ENCODE measurements at regions of chr12 and their contacts with region 1.

Region 1: GRCh38 chr12:89542912-89543592 is 17.2 kb upstream of the POC1B start:
- DNase-seq: peak; percentile 68 to 89
- ATAC-seq: peak; percentile 85 to 91
- H3K4me3 ChIP-seq: no peak overlapping the region
- H3K27ac ChIP-seq: peak overlapping the region; percentile 40 to 66; a peak in 5 of 6 replicates
- H3K4me1 ChIP-seq: peaks cover 27% of the 10 kb centered on the region
- CTCF ChIP-seq: peak; percentile 90
- EP300 ChIP-seq: no peak
- POLR2A ChIP-seq: no peak
- RAD21 ChIP-seq: peak; percentile 97 to 99

Region 2: GRCh38 chr12:89529738-89530137 is 13.3 kb before region 1 on chr12:
- CTCF ChIA-PET with region 1: interaction called, 14 read pairs
- POLR2A ChIA-PET with region 1: no interaction called
- DNase-seq: peak; percentile 66 to 67
- ATAC-seq: no peak
- H3K4me3 ChIP-seq: no peak overlapping the region
- H3K27ac ChIP-seq: peak overlapping the region in 1 of 2 experiments; percentile 31; a peak in 1 of 6 replicates
- H3K4me1 ChIP-seq: peaks cover 10% of the 10 kb centered on the region; the same call in 2 of the 3 replicates
- CTCF ChIP-seq: peak; percentile 84
- EP300 ChIP-seq: no peak
- POLR2A ChIP-seq: no peak
- RAD21 ChIP-seq: peak; percentile 89 to 92

Region 3: DNA sequence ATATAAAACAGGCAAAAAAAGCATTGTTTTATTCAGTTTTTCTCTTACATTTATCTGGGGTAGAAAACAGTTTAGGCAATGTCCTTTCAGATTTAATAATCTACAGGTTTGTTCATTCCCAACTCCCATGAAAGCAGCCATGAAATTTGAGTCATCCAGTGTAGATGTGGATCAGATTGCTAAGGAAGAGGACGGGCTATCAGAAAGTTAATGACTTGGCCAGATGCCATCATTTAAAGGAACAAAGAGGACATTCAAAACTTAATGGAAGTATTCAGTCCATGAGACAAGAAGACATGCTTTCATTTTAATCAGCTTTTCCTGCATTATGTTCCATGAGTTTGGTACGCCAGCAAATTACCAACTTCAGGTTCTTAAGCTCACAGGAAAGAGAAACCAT is 13.9 kb after region 1 on chr12:
- CTCF ChIA-PET with region 1: interaction called, 14 read pairs
- POLR2A ChIA-PET with region 1: no interaction called
- DNase-seq: no peak
- ATAC-seq: no peak
- H3K4me3 ChIP-seq: no peak overlapping the region
- H3K27ac ChIP-seq: no peak overlapping the region
- H3K4me1 ChIP-seq: no peaks in the 10 kb centered on the region
- CTCF ChIP-seq: no peak
- EP300 ChIP-seq: no peak
- POLR2A ChIP-seq: no peak
- RAD21 ChIP-seq: no peak

Region 4: GRCh38 chr12:89648211-89648930 is 105.3 kb after region 1 on chr12:
- CTCF ChIA-PET with region 1: no interaction called
- POLR2A ChIA-PET with region 1: no interaction called
- DNase-seq: no peak
- ATAC-seq: peak; percentile 50 to 58; a peak in 5 of 6 replicates
- H3K4me3 ChIP-seq: no peak overlapping the region
- H3K27ac ChIP-seq: no peak overlapping the region
- H3K4me1 ChIP-seq: peaks cover 22% of the 10 kb centered on the region
- CTCF ChIP-seq: no peak
- EP300 ChIP-seq: no peak
- POLR2A ChIP-seq: no peak
- RAD21 ChIP-seq: no peak

Region 5: DNA sequence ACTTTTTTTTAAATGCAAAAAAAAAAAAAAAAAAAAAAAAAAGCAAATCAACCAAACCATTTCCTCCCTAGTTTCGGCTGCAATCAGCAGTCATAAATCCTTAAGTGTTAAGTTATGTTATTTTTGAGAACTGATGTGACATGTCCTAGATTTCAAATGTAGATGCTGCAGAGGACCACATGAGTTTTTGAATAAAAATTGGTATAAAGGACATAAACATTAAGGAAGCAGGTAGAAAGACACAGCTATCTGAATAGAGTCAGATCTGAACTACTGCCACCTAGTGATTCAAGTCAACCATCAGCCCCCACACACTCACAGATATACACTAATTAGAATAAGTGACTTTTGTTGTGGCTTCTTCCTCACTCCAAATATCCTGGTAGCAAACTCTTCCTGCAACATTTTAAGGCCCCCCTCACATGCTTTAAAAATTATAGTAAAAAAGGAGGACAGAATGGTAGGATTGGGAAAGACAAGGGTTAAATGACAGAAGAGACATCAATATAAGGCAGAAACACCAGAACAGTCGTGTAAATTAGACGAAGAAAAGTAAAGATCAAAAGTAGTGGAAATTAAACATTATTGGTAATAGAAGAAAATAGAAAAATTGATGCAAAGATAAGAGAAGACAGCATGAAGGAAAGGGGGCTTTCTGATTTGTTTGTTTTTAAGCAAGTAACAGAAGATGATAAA is 560.1 kb after region 1 on chr12:
- CTCF ChIA-PET with region 1: interaction called, 12 read pairs
- POLR2A ChIA-PET with region 1: no interaction called
- DNase-seq: peak; percentile 18 to 61
- ATAC-seq: peak; percentile 72 to 84; a peak in 4 of 6 replicates
- H3K4me3 ChIP-seq: no peak overlapping the region
- H3K27ac ChIP-seq: no peak overlapping the region
- H3K4me1 ChIP-seq: peaks cover 42% of the 10 kb centered on the region
- CTCF ChIP-seq: peak; percentile 57
- EP300 ChIP-seq: no peak
- POLR2A ChIP-seq: no peak
- RAD21 ChIP-seq: peak; percentile 51 to 66

Region 6: DNA sequence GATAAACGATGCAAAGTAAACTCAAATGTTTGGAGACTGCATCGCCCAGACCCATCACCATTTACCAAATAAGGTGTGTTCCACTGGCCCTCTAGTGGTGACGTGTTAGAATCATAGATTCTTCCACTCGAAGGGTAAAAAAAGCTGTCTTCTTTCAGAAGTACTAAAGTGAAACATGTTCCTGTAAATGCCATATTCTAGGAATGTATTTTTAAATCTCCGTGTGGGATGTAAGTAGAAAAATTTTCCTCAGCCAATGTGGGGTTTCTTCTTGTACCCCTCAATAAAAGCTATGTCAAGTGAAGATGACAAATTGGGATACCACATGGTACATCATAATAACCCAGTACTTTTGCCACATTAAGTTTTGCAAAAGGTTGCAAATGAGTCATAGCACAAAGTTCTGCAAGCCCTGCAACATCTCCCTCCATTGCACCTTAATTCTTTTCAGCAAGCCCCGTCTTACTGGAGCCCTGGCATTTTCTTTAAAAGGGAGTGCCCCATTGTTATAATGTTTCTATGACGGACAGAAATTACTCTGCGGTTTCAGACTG is 1311.2 kb after region 1 on chr12:
- CTCF ChIA-PET with region 1: interaction called, 17 read pairs
- POLR2A ChIA-PET with region 1: no interaction called
- DNase-seq: peak; percentile 31 to 60
- ATAC-seq: peak; percentile 77 to 87; a peak in 5 of 6 replicates
- H3K4me3 ChIP-seq: no peak overlapping the region
- H3K27ac ChIP-seq: no peak overlapping the region
- H3K4me1 ChIP-seq: peaks cover 5% of the 10 kb centered on the region; the same call in 1 of the 3 replicates
- CTCF ChIP-seq: peak; percentile 70
- EP300 ChIP-seq: no peak
- POLR2A ChIP-seq: no peak
- RAD21 ChIP-seq: peak; percentile 70 to 72

Region 7: DNA sequence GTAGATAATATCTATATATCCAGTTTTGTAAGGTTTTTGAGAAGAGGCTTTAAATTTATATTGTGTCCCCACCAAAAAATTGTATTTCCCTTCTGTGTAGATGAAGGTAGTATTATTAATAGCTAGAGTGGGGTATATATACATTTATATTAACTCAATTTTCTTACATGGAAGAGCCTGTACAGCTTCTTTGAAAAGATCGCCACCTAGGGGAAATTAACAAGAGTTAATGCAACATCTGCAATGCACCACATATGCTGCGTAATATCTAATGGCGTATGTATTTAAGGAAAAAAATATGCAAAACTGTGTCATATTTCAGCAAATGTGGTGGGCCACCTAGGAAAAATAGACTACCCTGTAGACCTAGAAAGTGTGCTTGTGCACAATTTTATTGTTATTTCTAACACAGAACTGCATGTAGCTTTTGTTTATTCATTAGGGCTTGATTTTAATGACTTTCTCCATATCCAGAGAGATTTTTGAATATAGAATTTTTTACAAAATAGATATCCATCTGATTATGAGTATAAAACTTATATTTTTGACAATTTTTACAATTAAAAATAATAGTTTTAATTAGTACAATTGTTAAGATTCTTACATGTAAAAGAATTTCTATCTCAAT is 1397.9 kb after region 1 on chr12:
- CTCF ChIA-PET with region 1: interaction called, 21 read pairs
- POLR2A ChIA-PET with region 1: no interaction called
- DNase-seq: peak; percentile 54 to 76
- ATAC-seq: peak; percentile 89 to 93
- H3K4me3 ChIP-seq: no peak overlapping the region
- H3K27ac ChIP-seq: no peak overlapping the region
- H3K4me1 ChIP-seq: no peaks in the 10 kb centered on the region
- CTCF ChIP-seq: peak; percentile 88
- EP300 ChIP-seq: no peak
- POLR2A ChIP-seq: no peak
- RAD21 ChIP-seq: peak; percentile 80